ENCODE measurements at regions of chr11 and their contacts with region 1.

Region 1: GRCh38 chr11:117985953-117986887 is at the start of gene IL10RA:
- DNase-seq: peak; percentile 66 to 92 (median 80)
- ATAC-seq: peak; percentile 75
- H3K4me3 ChIP-seq: peak within 1 kb of the TSS; percentile 81 to 100
- H3K4me3 Mint-ChIP-seq: peak within 1 kb of the TSS; percentile 89
- H3K27ac ChIP-seq: peak within 1 kb of the TSS; percentile 88
- H3K27ac Mint-ChIP-seq: peak within 1 kb of the TSS; percentile 92
- H3K4me1 ChIP-seq: peaks cover 57% of the 10 kb centered on the region
- H3K4me1 Mint-ChIP-seq: peaks cover 72% of the 10 kb centered on the region
- H3K27me3 ChIP-seq: no peaks in the 10 kb centered on the region
- H3K27me3 Mint-ChIP-seq: no peaks in the 10 kb centered on the region
- CTCF ChIP-seq: no peak
- total RNA-seq, gene IL10RA: 295 to 299 TPM

Region 2: GRCh38 chr11:117828611-117829368 is 157.4 kb before region 1 on chr11:
- CTCF ChIA-PET with region 1: interaction called, 4 read pairs
- POLR2A ChIA-PET with region 1: interaction called, 6 read pairs
- intact Hi-C with region 1: loop called (anchors 2 to 5 kb)
- DNase-seq: peak; percentile 58 to 94 (median 89)
- ATAC-seq: peak; percentile 87
- H3K4me3 ChIP-seq: no peak overlapping the region
- H3K4me3 Mint-ChIP-seq: peak overlapping the region; percentile 53
- H3K27ac ChIP-seq: peak overlapping the region in 1 of 2 experiments; percentile 69
- H3K27ac Mint-ChIP-seq: peak overlapping the region; percentile 91
- H3K4me1 ChIP-seq: peaks cover 52% of the 10 kb centered on the region
- H3K4me1 Mint-ChIP-seq: peaks cover 69% of the 10 kb centered on the region
- H3K27me3 ChIP-seq: no peaks in the 10 kb centered on the region
- H3K27me3 Mint-ChIP-seq: no peaks in the 10 kb centered on the region
- CTCF ChIP-seq: no peak

Region 3: GRCh38 chr11:118010738-118011461 is 24.7 kb after region 1 on chr11:
- CTCF ChIA-PET with region 1: interaction called, 28 read pairs
- POLR2A ChIA-PET with region 1: interaction called, 633 read pairs
- intact Hi-C with region 1: no loop called
- DNase-seq: peak in 2 of 9 experiments; percentile 32 to 63
- ATAC-seq: no peak
- H3K4me3 ChIP-seq: no peak overlapping the region
- H3K4me3 Mint-ChIP-seq: no peak overlapping the region
- H3K27ac ChIP-seq: peak overlapping the region in 1 of 2 experiments; percentile 84
- H3K27ac Mint-ChIP-seq: peak overlapping the region; percentile 15
- H3K4me1 ChIP-seq: peaks cover 100% of the 10 kb centered on the region
- H3K4me1 Mint-ChIP-seq: peaks cover 98% of the 10 kb centered on the region
- H3K27me3 ChIP-seq: no peaks in the 10 kb centered on the region
- H3K27me3 Mint-ChIP-seq: no peaks in the 10 kb centered on the region
- CTCF ChIP-seq: no peak

Region 4: GRCh38 chr11:118046051-118046963 is 60.1 kb after region 1 on chr11:
- CTCF ChIA-PET with region 1: interaction called, 270 read pairs
- POLR2A ChIA-PET with region 1: interaction called, 84 read pairs
- intact Hi-C with region 1: loop called (anchors 1 kb)
- DNase-seq: peak; percentile 18 to 88 (median 59)
- ATAC-seq: peak; percentile 83
- H3K4me3 ChIP-seq: no peak overlapping the region
- H3K4me3 Mint-ChIP-seq: peak overlapping the region; percentile 38
- H3K27ac ChIP-seq: peak overlapping the region; percentile 40 to 82
- H3K27ac Mint-ChIP-seq: peak overlapping the region; percentile 94
- H3K4me1 ChIP-seq: peaks cover 91% of the 10 kb centered on the region
- H3K4me1 Mint-ChIP-seq: peaks cover 83% of the 10 kb centered on the region
- H3K27me3 ChIP-seq: no peaks in the 10 kb centered on the region
- H3K27me3 Mint-ChIP-seq: no peaks in the 10 kb centered on the region
- CTCF ChIP-seq: no peak

Measured in CD8-positive, alpha-beta T cell (primary cell).